ENCODE measurements at regions of chr13 and their contacts with region 1.

Region 1: GRCh38 chr13:46321494-46322225 is 65.4 kb downstream of the RUBCNL start:
- DNase-seq: no peak
- H3K4me3 ChIP-seq: no peak overlapping the region
- CTCF ChIP-seq: peak; percentile 72

Region 2: DNA sequence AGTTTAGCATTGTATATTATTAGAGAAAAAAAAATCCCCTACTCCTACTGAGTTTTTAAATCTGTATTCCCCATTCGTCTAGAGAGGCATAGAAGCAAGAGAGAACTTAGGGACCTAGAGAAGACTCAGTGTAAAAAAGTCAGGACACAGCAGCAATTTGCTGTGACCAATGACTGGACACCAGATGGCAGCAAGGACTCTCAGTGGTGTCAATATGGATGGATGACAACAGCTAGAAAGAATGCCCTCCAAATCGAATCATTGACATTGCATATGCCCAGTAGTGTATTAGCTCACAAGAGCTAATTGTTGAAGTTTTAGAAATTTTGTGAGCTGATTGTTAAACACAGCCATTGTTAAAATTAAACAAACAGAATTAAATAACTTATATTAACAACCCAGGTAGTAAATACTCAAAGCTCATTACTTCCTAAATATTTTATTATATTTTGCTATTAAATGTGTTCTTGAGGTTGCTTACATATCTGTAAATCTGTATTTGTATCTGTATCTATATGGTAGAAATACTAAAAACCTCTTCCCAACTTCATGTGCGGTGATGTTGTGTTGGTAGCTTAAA is 514.0 kb before region 1 on chr13:
- CTCF ChIA-PET with region 1: interaction called, 15 read pairs
- POLR2A ChIA-PET with region 1: no interaction called
- DNase-seq: no peak
- H3K4me3 ChIP-seq: no peak overlapping the region
- CTCF ChIP-seq: peak; percentile 38

Region 3: DNA sequence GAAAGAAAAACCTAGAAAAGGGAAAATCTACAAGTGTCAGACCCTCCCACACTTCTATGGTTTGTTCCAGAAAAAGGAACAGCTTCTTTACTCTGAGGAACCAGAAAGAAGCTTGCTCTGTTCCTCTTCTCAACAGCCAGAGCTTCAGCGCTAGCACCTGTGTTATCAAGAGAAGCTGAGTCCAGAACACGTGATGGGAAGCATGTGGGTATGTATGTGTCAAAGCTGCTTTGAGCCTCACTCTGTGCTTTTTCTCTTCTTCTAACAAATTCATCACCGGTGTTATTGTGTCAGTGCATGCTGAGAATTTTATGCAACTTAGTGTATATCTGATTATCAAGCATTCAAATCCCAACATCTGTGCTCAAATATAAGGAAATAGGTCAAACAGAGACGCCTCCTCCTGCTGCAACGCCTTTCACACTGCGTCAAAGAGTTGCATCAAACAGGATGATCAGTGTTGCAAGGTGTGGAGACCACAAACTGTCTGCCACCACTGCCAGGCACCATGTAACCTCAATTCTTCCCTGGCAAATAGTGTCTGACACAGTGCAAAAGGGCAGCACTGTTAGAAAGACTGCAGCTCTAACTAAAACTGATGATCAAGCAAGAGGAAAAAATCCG is 26.1 kb before region 1 on chr13:
- CTCF ChIA-PET with region 1: interaction called, 22 read pairs
- POLR2A ChIA-PET with region 1: interaction called, 3 read pairs
- DNase-seq: no peak
- H3K4me3 ChIP-seq: no peak overlapping the region
- CTCF ChIP-seq: no peak

Region 4: DNA sequence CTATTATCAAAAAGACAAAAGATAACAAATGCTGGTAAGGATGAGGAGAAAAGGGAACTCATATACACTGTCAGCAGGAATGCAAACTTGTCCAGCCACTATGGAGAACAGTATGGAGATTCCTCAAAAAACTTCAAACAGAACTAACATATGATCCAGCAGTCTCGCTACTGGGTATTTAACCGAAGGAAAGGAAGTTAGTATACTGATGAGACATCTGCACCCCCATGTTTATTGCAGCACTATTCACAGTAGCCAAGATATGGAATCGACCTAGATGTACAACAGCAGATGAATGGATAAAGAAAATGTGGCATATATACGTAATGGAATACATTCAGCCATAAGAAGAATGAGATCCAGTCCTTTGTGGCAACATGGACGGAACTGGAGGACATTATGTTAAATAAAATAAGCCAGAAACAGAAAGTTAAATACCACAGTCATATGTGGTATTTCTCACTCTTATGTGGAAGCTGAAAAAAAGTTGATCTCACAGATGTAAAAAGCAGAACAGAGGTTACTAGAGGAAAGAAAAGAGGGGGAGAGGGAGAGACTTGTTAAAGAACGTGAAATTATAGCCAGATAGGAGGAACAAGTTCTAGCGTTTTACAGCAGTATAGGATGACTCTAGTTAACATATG is 17.8 kb before region 1 on chr13:
- CTCF ChIA-PET with region 1: interaction called, 11 read pairs
- POLR2A ChIA-PET with region 1: no interaction called
- DNase-seq: no peak
- H3K4me3 ChIP-seq: no peak overlapping the region
- CTCF ChIP-seq: no peak

Region 5: DNA sequence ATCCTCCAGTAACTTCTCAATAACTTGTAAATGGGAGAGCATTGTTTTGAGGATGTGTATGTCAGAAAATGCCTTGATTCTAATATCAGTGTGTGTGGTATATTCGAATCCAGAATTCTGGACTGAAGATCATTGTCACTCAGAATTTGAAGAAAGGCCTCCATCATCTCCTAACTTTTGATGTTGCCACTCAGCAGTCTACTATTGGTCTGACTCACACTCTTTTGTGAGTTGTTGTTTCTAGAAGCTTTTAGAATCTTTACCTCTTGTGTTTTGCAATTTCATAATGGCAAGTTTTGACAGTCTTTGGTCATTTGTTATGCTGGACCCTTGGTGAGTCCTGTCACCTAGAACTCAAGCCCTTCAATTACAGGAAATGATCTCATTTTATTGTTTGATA is 11.6 kb before region 1 on chr13:
- CTCF ChIA-PET with region 1: interaction called, 15 read pairs
- POLR2A ChIA-PET with region 1: no interaction called
- DNase-seq: no peak
- H3K4me3 ChIP-seq: no peak overlapping the region
- CTCF ChIP-seq: no peak